ENCODE measurements at regions of chr9 and their contacts with region 1.

Region 1: GRCh38 chr9:96327694-96328352 is 25.8 kb upstream of the HSD17B3 start:
- DNase-seq: peak; percentile 23
- H3K4me3 Mint-ChIP-seq: no peak overlapping the region
- H3K27ac Mint-ChIP-seq: no peak overlapping the region
- H3K4me1 Mint-ChIP-seq: no peaks in the 10 kb centered on the region
- H3K27me3 Mint-ChIP-seq: peaks cover 3% of the 10 kb centered on the region

Region 2: GRCh38 chr9:96654443-96655197 is 326.8 kb after region 1 on chr9:
- intact Hi-C with region 1: loop called (anchors 5 kb)
- DNase-seq: peak; percentile 62
- H3K4me3 Mint-ChIP-seq: peak overlapping the region; percentile 85
- H3K27ac Mint-ChIP-seq: peak overlapping the region; percentile 73
- H3K4me1 Mint-ChIP-seq: peaks cover 16% of the 10 kb centered on the region
- H3K27me3 Mint-ChIP-seq: peaks cover 14% of the 10 kb centered on the region

Region 3: DNA sequence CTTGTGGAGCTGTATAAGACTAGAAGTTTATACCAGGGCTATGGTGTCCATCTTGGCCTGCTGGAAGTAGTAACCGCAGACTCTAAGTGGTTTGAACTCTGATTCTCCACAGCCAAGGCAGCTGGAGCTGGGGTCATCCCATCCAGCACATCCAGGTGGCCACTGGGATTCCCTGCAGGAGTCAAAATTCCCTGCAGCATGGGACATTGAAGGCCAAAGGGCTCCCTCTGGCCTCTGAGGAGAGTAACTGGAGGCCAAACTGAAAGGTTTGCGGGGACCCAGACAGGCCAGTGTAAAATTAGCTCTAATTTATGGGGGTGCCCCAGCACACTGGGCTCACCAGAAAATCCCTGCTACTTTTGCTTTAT is 339.5 kb after region 1 on chr9:
- intact Hi-C with region 1: loop called (anchors 2 kb)
- DNase-seq: no peak
- H3K4me3 Mint-ChIP-seq: no peak overlapping the region
- H3K27ac Mint-ChIP-seq: no peak overlapping the region
- H3K4me1 Mint-ChIP-seq: no peaks in the 10 kb centered on the region
- H3K27me3 Mint-ChIP-seq: peaks cover 1% of the 10 kb centered on the region